ENCODE measurements at regions of chr16 and their contacts with region 1.

Region 1: DNA sequence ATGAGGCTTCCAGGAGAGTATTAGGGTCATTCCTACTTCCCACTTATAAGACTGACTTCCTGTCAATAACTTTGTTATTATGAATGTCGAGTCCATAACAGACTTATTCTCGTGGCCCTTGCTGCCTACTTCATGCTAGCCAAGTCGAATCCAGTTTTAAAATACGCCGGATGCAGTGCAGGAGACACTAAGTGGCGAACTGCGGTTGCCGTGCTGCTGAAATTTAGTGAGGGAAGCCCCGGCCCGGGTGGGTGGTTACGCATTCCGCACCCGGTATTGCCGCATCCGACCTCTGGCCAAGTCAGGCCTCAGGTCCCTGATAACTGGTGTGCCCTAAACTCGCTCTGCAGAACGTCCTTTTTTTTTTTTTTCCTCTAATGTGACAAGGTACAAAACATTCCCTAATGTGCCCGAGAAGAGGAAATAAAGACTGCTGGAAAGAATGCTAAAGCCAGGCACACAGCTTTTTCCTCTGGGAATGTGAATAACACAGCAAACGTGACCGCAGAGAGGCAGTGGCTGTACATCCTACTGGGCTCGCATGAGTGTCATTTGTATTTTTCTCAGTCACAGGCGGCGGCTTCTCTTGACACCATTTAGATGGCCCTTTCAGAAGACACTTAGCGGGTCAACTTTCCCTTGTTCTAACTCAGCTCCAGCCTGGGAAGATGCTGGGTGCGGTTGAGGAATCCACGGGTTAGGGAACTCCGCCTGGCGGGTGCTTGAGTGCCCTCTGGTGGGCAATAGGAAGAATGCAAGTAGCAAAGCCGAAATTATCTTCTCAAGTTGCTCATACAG is 7.1 kb upstream of the AKTIP start:
- DNase-seq: no peak
- ATAC-seq: peak; percentile 93
- H3K4me3 ChIP-seq: peak overlapping the region; percentile 42; the same call in 1 of the 2 replicates
- H3K27ac ChIP-seq: no peak overlapping the region
- H3K4me1 ChIP-seq: peaks cover 5% of the 10 kb centered on the region; the same call in 1 of the 2 replicates
- H3K27me3 ChIP-seq: no peaks in the 10 kb centered on the region
- CTCF ChIP-seq: peak; percentile 89 to 93 (median 89)
- EP300 ChIP-seq: no peak
- POLR2A ChIP-seq: no peak
- RAD21 ChIP-seq: peak; percentile 82

Region 2: GRCh38 chr16:53435066-53435688 is 74.9 kb before region 1 on chr16:
- CTCF ChIA-PET with region 1: interaction called, 3 read pairs
- POLR2A ChIA-PET with region 1: no interaction called
- RAD21 ChIA-PET with region 1: interaction called, 9 read pairs
- SMC1A ChIA-PET with region 1: no interaction called
- in situ Hi-C with region 1: no loop called
- intact Hi-C with region 1: loop called (anchors 2 kb)
- DNase-seq: peak; percentile 73
- ATAC-seq: peak; percentile 93
- H3K4me3 ChIP-seq: peak overlapping the region; percentile 89
- H3K27ac ChIP-seq: peak overlapping the region; percentile 75
- H3K4me1 ChIP-seq: no peaks in the 10 kb centered on the region
- H3K27me3 ChIP-seq: no peaks in the 10 kb centered on the region
- CTCF ChIP-seq: no peak
- EP300 ChIP-seq: no peak
- POLR2A ChIP-seq: peak; percentile 69
- RAD21 ChIP-seq: no peak

Region 3: GRCh38 chr16:53530046-53530445 is 19.9 kb after region 1 on chr16:
- CTCF ChIA-PET with region 1: interaction called, 10 read pairs
- POLR2A ChIA-PET with region 1: no interaction called
- RAD21 ChIA-PET with region 1: interaction called, 5 read pairs
- SMC1A ChIA-PET with region 1: interaction called, 3 read pairs
- in situ Hi-C with region 1: no loop called
- intact Hi-C with region 1: no loop called
- DNase-seq: no peak
- ATAC-seq: no peak
- H3K4me3 ChIP-seq: no peak overlapping the region
- H3K27ac ChIP-seq: no peak overlapping the region
- H3K4me1 ChIP-seq: peaks cover 11% of the 10 kb centered on the region
- H3K27me3 ChIP-seq: no peaks in the 10 kb centered on the region
- CTCF ChIP-seq: no peak
- EP300 ChIP-seq: no peak
- POLR2A ChIP-seq: no peak
- RAD21 ChIP-seq: no peak

Region 4: GRCh38 chr16:53666786-53667415 is 156.8 kb after region 1 on chr16:
- CTCF ChIA-PET with region 1: no interaction called
- POLR2A ChIA-PET with region 1: no interaction called
- RAD21 ChIA-PET with region 1: no interaction called
- SMC1A ChIA-PET with region 1: no interaction called
- in situ Hi-C with region 1: no loop called
- intact Hi-C with region 1: no loop called
- DNase-seq: no peak
- ATAC-seq: no peak
- H3K4me3 ChIP-seq: no peak overlapping the region
- H3K27ac ChIP-seq: no peak overlapping the region
- H3K4me1 ChIP-seq: peaks cover 8% of the 10 kb centered on the region; the same call in 1 of the 2 replicates
- H3K27me3 ChIP-seq: no peaks in the 10 kb centered on the region
- CTCF ChIP-seq: no peak
- EP300 ChIP-seq: no peak
- POLR2A ChIP-seq: no peak
- RAD21 ChIP-seq: no peak

Region 5: DNA sequence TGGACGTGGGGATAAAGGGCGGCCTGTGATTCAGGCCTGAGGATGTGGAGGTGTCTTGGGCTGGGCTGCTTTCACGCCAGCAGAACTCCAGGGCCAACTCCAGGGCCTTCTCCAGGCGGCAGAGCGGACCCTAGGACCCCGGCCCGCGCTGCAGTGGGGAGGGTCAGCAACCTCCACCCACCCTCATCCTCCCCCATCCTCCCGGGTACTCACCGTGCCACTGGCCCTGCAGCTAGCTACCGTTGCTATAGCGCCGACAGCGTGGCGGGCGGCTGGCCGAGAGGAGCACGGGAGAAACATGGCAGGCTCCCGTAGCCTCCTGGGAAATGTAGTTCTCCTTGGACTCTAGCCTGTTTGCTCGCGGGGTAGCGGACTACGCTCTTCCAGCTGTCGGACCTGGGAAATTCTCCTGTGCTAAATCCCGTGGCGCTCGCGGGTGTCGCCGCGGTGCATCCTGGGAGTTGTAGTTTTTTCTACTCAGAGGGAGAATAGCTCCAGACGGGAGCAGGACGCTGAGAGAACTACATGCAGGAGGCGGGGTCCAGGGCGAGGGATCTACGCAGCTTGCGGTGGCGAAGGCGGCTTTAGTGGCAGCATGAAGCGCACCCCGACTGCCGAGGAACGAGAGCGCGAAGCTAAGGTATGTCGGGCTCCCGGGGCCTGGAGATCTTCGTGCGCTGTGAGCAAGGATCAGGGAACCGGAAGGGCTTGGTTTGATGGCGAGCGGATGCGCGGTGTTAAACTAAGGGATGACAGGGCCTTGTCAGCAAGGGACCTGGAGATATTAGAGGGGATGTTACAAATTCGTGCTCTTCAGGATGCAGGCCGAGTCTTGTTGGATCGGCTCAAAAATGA is 193.7 kb after region 1 on chr16 and contains the starts of genes FTO and RPGRIP1L:
- CTCF ChIA-PET with region 1: no interaction called
- POLR2A ChIA-PET with region 1: no interaction called
- RAD21 ChIA-PET with region 1: no interaction called
- SMC1A ChIA-PET with region 1: no interaction called
- in situ Hi-C with region 1: no loop called
- intact Hi-C with region 1: loop called (anchors 10 kb)
- DNase-seq: peak; percentile 98
- ATAC-seq: peak; percentile 99
- H3K4me3 ChIP-seq: peak within 1 kb of the TSS; percentile 83
- H3K27ac ChIP-seq: peak within 1 kb of the TSS; percentile 34; the same call in 1 of the 2 replicates
- H3K4me1 ChIP-seq: peaks cover 3% of the 10 kb centered on the region
- H3K27me3 ChIP-seq: no peaks in the 10 kb centered on the region
- CTCF ChIP-seq: no peak
- EP300 ChIP-seq: no peak
- POLR2A ChIP-seq: peak; percentile 71
- RAD21 ChIP-seq: no peak
- polyA plus RNA-seq, gene FTO: 20.1 to 20.3 TPM
- polyA plus RNA-seq, gene RPGRIP1L: 3.9 to 4.0 TPM

Region 6: DNA sequence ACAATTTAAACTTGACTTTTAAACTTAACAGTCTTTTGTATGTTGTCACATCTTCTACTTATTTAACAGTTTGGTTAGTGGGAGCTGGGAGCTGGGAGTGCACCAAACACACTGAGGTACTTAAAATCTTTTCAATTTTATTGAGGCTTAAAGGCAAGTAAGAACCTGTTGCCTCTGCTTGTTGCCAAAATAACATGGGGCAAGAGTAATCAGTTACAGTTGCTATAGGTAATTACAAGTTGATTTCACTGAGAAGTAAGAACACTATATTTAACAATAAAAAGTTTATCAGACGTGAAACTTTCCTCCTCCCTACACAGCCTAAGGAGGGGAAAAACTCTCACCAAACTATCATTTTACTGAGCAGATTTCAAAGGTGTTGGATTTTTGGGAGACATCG is 329.0 kb after region 1 on chr16:
- CTCF ChIA-PET with region 1: no interaction called
- POLR2A ChIA-PET with region 1: no interaction called
- RAD21 ChIA-PET with region 1: no interaction called
- SMC1A ChIA-PET with region 1: no interaction called
- in situ Hi-C with region 1: no loop called
- intact Hi-C with region 1: no loop called
- DNase-seq: no peak
- ATAC-seq: no peak
- H3K4me3 ChIP-seq: no peak overlapping the region
- H3K27ac ChIP-seq: no peak overlapping the region
- H3K4me1 ChIP-seq: peaks cover 4% of the 10 kb centered on the region
- H3K27me3 ChIP-seq: no peaks in the 10 kb centered on the region
- CTCF ChIP-seq: no peak
- EP300 ChIP-seq: no peak
- POLR2A ChIP-seq: no peak
- RAD21 ChIP-seq: no peak

Measured in GM12878 (cell line).